AG04450 (cell line): ENCODE measurements at regions of chr10 and their contacts with region 1.

Region 1: DNA sequence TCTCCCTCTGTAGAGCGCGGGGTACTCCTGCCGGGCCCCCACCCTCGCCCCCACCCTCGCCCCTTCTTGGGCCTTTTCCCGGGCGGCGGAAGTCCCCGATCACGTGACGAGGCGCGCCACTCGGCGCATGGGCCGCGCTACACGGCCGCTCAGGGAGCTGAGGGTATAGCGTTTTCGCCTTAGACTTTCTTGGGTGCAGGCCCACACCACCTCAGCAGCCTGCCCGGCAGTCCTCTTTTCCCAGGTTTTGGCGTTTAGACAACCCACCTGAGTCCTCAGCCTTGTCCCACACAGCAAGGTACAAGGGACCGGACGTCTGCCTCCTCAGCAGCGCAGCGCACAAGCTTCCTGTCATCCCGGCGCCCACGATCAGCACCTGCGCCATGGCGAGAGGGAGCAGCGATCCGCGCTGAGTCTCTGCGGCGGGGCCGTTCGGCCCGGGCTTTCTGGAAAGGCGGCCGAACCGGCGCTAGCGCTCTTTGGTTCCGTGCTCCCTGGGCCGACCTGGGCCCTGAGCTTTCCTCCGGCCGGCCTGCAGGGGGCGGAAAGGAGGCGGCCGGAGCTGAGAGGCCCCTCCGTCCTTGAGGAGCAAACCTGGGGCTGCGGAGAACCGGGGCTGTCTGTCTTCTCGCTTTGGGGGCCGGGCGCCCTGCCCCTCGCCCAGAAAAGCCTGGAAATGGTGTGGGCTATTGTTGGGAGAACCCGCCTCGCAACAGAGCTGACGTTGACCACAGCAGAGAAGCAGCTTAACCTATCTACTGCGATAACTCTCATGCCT is at the start of gene RNLS:
- DNase-seq: no peak
- H3K4me3 ChIP-seq: peak within 1 kb of the TSS; percentile 65
- H3K27ac ChIP-seq: peak within 1 kb of the TSS; percentile 52
- H3K27me3 ChIP-seq: no peaks in the 10 kb centered on the region
- CTCF ChIP-seq: peak; percentile 78
- polyA plus RNA-seq, gene RNLS: 6.1 and 8.0 TPM in 2 replicates

Region 2: GRCh38 chr10:88565072-88565471 is 17.9 kb before region 1 on chr10:
- CTCF ChIA-PET with region 1: interaction called, 11 read pairs
- POLR2A ChIA-PET with region 1: no interaction called
- DNase-seq: no peak
- H3K4me3 ChIP-seq: no peak overlapping the region
- H3K27ac ChIP-seq: no peak overlapping the region
- H3K27me3 ChIP-seq: no peaks in the 10 kb centered on the region
- CTCF ChIP-seq: peak; percentile 46

Region 3: DNA sequence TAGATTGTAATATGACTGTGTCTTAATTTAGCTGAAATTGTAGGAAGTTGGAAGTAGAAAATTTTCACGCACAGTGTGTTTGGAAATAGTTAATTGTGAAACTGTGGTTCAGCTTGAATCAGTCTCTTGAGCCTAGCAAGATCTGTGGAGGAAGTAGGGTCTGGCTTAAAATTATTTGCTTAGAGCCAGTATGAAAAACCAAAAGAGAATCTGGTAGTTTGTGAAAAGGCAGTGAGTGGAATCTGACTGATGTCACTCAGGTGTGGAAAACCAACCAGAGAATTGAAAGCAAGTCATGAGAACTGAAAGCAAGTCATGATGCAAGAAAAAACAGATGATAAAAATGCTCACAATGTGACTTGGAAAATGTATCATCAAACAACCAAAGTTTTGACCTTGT is 15.1 kb after region 1 on chr10:
- CTCF ChIA-PET with region 1: interaction called, 11 read pairs
- POLR2A ChIA-PET with region 1: no interaction called
- DNase-seq: no peak
- H3K4me3 ChIP-seq: no peak overlapping the region
- H3K27ac ChIP-seq: no peak overlapping the region
- H3K27me3 ChIP-seq: no peaks in the 10 kb centered on the region
- CTCF ChIP-seq: no peak